CD4-positive, alpha-beta memory T cell (primary cell): ENCODE measurements at regions of chr16 and their contacts with region 1.

Region 1: GRCh38 chr16:58129097-58129936 is at the start of gene CFAP20:
- DNase-seq: peak; percentile 96 to 97 (median 97)
- H3K4me3 ChIP-seq: peak within 1 kb of the TSS; percentile 64 to 96
- H3K4me3 Mint-ChIP-seq: peak within 1 kb of the TSS; percentile 91 to 96 (median 94)
- H3K27ac ChIP-seq: peak within 1 kb of the TSS; percentile 82
- H3K27ac Mint-ChIP-seq: peak within 1 kb of the TSS; percentile 93 to 98 (median 97)
- H3K4me1 ChIP-seq: peaks cover 39% of the 10 kb centered on the region
- H3K4me1 Mint-ChIP-seq: peaks cover 37 to 51% (median 42%) of the 10 kb centered on the region in 4 donors
- H3K27me3 ChIP-seq: no peaks in the 10 kb centered on the region
- H3K27me3 Mint-ChIP-seq: no peaks in the 10 kb centered on the region
- total RNA-seq, gene CFAP20: 25.4 to 26.3 TPM

Region 2: GRCh38 chr16:57244767-57245471 is 884.4 kb before region 1 on chr16 and contains the start of gene ARL2BP:
- CTCF ChIA-PET with region 1: no interaction called
- POLR2A ChIA-PET with region 1: no interaction called
- intact Hi-C with region 1: loop called (anchors 5 kb)
- DNase-seq: peak; percentile 94 to 98 (median 95)
- H3K4me3 ChIP-seq: peak within 1 kb of the TSS; percentile 49 to 60
- H3K4me3 Mint-ChIP-seq: peak within 1 kb of the TSS; percentile 91 to 98 (median 95)
- H3K27ac ChIP-seq: peak within 1 kb of the TSS; percentile 78
- H3K27ac Mint-ChIP-seq: peak within 1 kb of the TSS; percentile 93 to 99 (median 98)
- H3K4me1 ChIP-seq: peaks cover 17% of the 10 kb centered on the region
- H3K4me1 Mint-ChIP-seq: peaks cover 13 to 21% (median 18%) of the 10 kb centered on the region in 4 donors
- H3K27me3 ChIP-seq: no peaks in the 10 kb centered on the region
- H3K27me3 Mint-ChIP-seq: no peaks in the 10 kb centered on the region
- total RNA-seq, gene ARL2BP: 48.0 to 49.1 TPM

Region 3: DNA sequence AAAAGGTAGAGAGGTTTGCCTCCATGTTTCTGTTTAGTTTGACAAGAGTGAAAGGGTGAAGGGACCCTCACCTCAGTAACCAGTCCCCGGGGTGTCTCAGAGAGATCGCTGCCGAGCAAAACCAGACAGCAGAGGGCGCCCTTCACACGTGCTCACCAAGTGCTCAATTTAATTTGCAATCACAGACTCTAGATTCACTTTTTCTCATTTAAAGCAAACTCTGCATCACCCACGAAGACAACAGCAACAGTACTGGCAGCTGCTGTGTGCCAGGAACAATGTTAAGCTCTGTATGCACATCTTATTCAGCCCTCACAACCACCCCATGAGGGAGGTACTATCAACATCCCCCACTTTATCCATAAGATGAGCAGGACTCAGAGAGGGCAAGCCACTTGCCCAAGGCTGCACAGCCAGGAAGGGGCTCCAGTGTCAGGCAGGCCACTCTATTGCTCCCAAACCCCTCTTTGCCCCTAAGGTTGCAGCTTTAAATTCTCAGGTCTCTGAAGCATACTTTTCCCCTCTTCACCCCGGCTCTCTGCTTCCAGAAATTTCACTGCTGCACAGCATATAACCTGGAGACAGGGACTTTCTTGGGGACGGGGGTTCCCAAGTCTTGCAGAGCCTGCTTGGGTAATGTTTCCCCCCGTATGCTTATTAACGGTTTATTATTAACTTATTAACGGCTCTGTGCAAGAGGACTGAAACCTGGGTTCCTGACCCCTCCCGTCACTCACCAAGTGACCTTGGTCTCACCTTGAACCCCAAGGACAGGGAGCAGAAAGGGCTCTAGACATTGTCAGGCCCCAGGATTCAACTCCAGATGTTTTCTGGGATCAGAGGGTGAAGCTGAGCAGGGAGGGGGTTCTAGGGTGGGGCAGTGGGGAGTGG is 229.3 kb before region 1 on chr16:
- CTCF ChIA-PET with region 1: no interaction called
- POLR2A ChIA-PET with region 1: no interaction called
- intact Hi-C with region 1: loop called (anchors 2 kb)
- DNase-seq: peak; percentile 68 to 75 (median 71)
- H3K4me3 ChIP-seq: no peak overlapping the region
- H3K4me3 Mint-ChIP-seq: no peak overlapping the region
- H3K27ac ChIP-seq: no peak overlapping the region
- H3K27ac Mint-ChIP-seq: peak overlapping the region in 1 of 7 donors; percentile 53
- H3K4me1 ChIP-seq: peaks cover under 1% of the 10 kb centered on the region
- H3K4me1 Mint-ChIP-seq: peaks cover under 1 to 5% (median 4%) of the 10 kb centered on the region in 4 donors
- H3K27me3 ChIP-seq: no peaks in the 10 kb centered on the region
- H3K27me3 Mint-ChIP-seq: peaks cover 5 to 21% of the 10 kb centered on the region in 2 donors

Region 4: DNA sequence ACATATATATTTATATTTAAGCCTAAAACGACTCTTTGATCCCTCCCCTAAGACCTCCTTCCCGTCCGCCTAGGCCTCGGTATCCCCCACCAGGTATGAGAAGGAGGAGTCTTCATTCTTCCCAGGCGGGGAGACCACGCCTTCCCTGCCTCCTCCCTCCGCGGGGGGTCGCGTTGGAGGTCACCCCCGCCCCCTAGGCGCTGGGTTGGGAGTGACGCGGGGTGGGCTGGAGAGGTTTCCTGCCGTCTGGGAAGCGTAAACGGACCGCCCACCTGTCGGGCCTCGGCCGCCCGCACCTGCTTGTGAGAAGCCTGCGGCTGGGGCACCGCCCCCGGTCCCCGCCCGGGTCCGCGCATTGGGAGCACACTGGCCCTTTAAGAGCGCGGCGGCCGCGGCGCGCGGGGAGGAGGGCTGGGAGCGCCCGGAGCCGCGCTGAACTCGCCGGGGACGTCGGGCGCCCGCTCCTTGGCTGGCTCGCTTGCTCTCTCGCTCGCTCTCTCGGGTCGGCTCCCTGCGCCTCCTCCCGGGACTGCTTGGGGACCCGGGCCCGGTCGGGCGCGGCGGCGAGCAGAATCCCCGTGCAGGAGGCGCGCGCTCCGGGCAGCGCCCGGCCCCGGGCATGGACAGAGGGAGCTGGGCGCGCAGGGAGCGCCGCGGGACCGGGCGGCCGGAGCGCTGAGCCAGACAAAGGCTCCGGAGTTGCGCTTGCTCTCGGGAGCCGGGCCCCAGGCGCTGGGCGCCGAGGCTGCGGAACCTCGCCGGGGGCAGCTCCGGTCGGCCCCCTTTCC is 103.8 kb before region 1 on chr16 and contains the start of gene MMP15:
- CTCF ChIA-PET with region 1: interaction called, 5 read pairs
- POLR2A ChIA-PET with region 1: interaction called, 27 read pairs
- intact Hi-C with region 1: loop called (anchors 1 kb)
- DNase-seq: peak; percentile 50 to 77 (median 56)
- H3K4me3 ChIP-seq: peak within 1 kb of the TSS; percentile 11 to 53
- H3K4me3 Mint-ChIP-seq: peak within 1 kb of the TSS; percentile 89 to 99 (median 93)
- H3K27ac ChIP-seq: peak within 1 kb of the TSS; percentile 34
- H3K27ac Mint-ChIP-seq: peak within 1 kb of the TSS; percentile 81 to 93 (median 91)
- H3K4me1 ChIP-seq: peaks cover 19% of the 10 kb centered on the region
- H3K4me1 Mint-ChIP-seq: peaks cover 6 to 29% (median 18%) of the 10 kb centered on the region in 4 donors
- H3K27me3 ChIP-seq: no peaks in the 10 kb centered on the region
- H3K27me3 Mint-ChIP-seq: peaks cover 0 to 1% of the 10 kb centered on the region in 2 donors
- total RNA-seq, gene MMP15: 1.6 to 1.8 TPM

Region 5: GRCh38 chr16:58176608-58177352 is 47.5 kb after region 1 on chr16:
- CTCF ChIA-PET with region 1: no interaction called
- POLR2A ChIA-PET with region 1: interaction called, 10 read pairs
- intact Hi-C with region 1: no loop called
- DNase-seq: peak in 4 of 5 donors; percentile 7 to 28 (median 24)
- H3K4me3 ChIP-seq: no peak overlapping the region
- H3K4me3 Mint-ChIP-seq: peak overlapping the region; percentile 0 to 76 (median 56)
- H3K27ac ChIP-seq: peak overlapping the region; percentile 25
- H3K27ac Mint-ChIP-seq: peak overlapping the region; percentile 38 to 91 (median 77)
- H3K4me1 ChIP-seq: peaks cover 30% of the 10 kb centered on the region
- H3K4me1 Mint-ChIP-seq: peaks cover 19 to 35% (median 24%) of the 10 kb centered on the region in 4 donors
- H3K27me3 ChIP-seq: no peaks in the 10 kb centered on the region
- H3K27me3 Mint-ChIP-seq: no peaks in the 10 kb centered on the region

Region 6: DNA sequence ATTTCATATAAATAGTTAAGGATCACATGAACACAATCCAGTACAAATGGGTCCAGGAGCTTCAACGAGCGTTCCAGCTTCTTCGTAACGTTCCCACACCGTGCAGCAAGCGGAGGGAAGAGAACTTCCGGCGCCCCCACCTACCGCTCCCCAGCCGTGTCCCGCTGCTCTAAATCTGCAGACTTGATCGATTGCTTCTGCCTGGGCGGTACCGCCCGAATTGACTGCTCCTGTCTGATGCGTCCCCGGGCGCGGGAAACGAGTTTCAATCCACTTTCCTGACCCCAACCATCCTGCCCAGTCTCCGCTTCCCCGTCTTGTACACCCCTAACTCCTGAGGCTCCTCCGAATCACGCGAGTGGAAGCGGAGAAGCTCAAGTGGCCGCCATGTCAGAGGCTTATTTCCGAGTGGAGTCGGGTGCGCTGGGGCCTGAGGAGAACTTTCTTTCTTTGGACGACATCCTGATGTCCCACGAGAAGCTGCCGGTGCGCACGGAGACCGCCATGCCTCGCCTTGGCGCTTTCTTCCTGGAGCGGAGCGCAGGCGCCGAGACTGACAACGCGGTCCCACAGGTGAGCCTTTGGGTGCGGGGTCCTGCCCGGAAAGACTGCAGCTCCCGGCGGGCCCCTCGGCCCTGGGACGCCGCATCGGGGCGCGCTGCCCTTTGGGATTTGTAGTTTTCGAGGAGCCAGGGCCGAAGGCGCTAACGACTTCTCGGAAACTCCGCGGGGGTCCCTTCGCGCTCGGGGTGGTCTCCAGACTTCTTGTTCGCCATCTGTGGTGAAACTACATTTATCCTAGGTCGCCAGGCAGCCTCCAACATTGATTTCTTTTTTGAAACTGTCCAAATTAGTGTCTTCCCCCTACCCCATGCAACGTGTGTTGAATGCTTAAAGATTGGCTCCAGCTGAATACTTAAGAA is 263.2 kb after region 1 on chr16 and contains the start of gene GINS3:
- CTCF ChIA-PET with region 1: no interaction called
- POLR2A ChIA-PET with region 1: interaction called, 4 read pairs
- intact Hi-C with region 1: loop called (anchors 2 kb)
- DNase-seq: peak; percentile 77 to 82 (median 80)
- H3K4me3 ChIP-seq: peak within 1 kb of the TSS; percentile 99
- H3K4me3 Mint-ChIP-seq: peak within 1 kb of the TSS; percentile 98 to 100 (median 99)
- H3K27ac ChIP-seq: peak within 1 kb of the TSS; percentile 75
- H3K27ac Mint-ChIP-seq: peak within 1 kb of the TSS; percentile 90 to 100 (median 97)
- H3K4me1 ChIP-seq: peaks cover 7% of the 10 kb centered on the region
- H3K4me1 Mint-ChIP-seq: peaks cover 3 to 20% (median 13%) of the 10 kb centered on the region in 4 donors
- H3K27me3 ChIP-seq: no peaks in the 10 kb centered on the region
- H3K27me3 Mint-ChIP-seq: no peaks in the 10 kb centered on the region
- total RNA-seq, gene GINS3: 1.3 to 2.2 TPM